Activated naive CD4-positive, alpha-beta T cell treated with anti-CD3 and anti-CD28 coated beads for 36 hours (primary cell): ENCODE measurements at regions of chr19 and their contacts with region 1.

Region 1: DNA sequence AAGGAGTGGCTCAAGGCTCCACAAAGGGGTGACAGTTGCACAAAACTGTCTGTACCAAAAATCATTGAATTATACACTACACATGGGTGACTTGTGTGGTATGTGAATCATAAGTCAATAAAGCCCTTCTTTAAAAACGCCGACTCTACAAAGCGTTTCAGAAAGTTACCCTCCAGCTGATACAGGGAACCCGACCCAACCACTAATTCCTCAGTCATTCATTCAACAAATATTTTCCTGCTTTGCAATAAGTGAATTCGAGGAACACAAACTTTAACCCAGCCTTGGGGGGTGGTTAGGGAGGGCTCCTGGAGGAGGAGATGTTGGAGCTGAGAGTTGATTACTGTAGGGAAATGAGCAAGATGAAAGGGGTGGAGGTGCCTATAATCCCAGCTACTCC is 32.0 kb downstream of the LTBP4 start:
- DNase-seq: no peak
- H3K4me3 Mint-ChIP-seq: no peak overlapping the region
- H3K27ac Mint-ChIP-seq: no peak overlapping the region
- H3K4me1 Mint-ChIP-seq: peaks cover 10% of the 10 kb centered on the region
- H3K27me3 Mint-ChIP-seq: peaks cover 3% of the 10 kb centered on the region

Region 2: GRCh38 chr19:40465557-40466150 is 167.6 kb before region 1 on chr19 and contains the start of gene BLVRB:
- CTCF ChIA-PET with region 1: interaction called, 6 read pairs
- intact Hi-C with region 1: loop called (anchors 1 kb)
- DNase-seq: peak; percentile 100
- H3K4me3 Mint-ChIP-seq: peak within 1 kb of the TSS; percentile 78
- H3K27ac Mint-ChIP-seq: peak within 1 kb of the TSS; percentile 50
- H3K4me1 Mint-ChIP-seq: peaks cover 26% of the 10 kb centered on the region
- H3K27me3 Mint-ChIP-seq: peaks cover 10% of the 10 kb centered on the region
- total RNA-seq, gene BLVRB: 29.4 to 30.2 TPM

Region 3: GRCh38 chr19:40529093-40529954 is 103.9 kb before region 1 on chr19:
- CTCF ChIA-PET with region 1: interaction called, 26 read pairs
- intact Hi-C with region 1: loop called (anchors 2 kb)
- DNase-seq: peak; percentile 92
- H3K4me3 Mint-ChIP-seq: peak overlapping the region; percentile 43
- H3K27ac Mint-ChIP-seq: no peak overlapping the region
- H3K4me1 Mint-ChIP-seq: peaks cover 10% of the 10 kb centered on the region
- H3K27me3 Mint-ChIP-seq: peaks cover 13% of the 10 kb centered on the region

Region 4: DNA sequence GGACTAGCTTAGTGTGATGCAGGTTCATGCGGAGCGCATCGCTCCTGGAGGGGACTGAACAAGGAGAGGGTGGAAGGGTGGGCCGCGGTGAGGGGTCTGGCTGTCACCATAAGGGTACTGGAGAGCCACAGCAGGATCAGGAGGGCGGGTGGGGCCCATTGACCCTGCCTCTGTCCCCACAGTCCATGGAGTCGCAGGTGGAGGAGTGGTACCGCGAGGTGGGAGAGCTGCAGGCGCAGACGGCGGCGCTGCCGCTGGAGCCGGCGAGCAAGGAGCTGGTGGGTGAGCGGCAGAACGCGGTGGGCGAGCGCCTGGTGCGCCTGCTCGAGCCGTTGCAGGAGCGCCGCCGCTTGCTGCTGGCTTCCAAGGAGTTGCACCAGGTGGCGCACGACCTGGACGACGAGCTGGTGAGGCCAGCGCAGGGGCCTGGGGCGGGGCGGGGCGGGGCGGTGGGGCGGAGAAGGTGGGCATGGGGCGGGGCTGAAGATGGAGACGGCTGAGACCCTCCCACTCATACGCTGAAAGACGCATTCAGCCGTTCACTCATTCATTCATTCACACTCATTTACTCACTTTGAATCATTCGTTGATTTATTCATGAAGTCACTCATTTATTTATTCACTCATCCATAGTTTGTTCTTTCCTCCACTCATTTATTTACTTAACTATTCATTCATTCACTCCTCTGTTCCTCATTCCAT is 84.0 kb before region 1 on chr19:
- CTCF ChIA-PET with region 1: interaction called, 21 read pairs
- intact Hi-C with region 1: loop called (anchors 1 kb)
- DNase-seq: peak; percentile 80
- H3K4me3 Mint-ChIP-seq: peak overlapping the region; percentile 0
- H3K27ac Mint-ChIP-seq: no peak overlapping the region
- H3K4me1 Mint-ChIP-seq: peaks cover 10% of the 10 kb centered on the region
- H3K27me3 Mint-ChIP-seq: peaks cover 41% of the 10 kb centered on the region

Region 5: DNA sequence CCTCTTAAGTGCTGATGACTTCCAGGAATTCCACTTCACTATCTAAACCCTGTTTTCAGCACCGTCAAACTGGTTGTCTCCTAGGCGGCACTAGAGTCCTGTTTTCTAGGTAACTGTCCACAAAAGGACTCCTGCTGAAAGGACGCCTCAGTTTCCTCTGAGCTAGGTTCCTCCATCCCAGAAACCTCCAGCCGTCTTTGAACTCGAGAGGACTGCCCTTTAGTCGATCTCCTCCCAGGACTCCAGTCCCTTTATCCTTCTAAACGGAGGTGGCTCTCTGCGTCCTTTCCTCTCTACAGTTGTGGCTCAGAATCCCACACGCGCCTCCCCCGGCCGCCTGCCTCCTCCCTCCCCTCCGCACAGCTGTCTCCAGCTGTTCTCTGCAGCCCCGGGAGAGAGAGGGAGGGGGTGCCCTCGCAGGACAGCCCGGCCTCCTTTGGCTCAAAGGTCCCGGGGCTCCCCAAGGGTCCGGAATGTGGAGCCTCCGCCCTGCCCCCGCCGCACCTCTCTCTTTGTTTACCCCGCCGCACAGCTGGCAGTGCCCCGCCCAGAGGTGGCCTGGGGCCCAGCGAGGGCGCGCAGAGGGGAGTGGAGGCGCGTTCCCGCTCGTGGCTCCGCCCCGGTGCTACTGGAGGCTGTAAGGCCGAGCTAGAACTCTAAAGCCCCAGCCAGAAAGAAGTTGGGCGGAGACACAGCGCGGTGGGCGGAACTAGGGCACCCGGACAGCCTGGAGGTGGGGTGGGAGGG is 29.6 kb before region 1 on chr19:
- CTCF ChIA-PET with region 1: interaction called, 68 read pairs
- intact Hi-C with region 1: loop called (anchors 1 kb)
- DNase-seq: peak; percentile 98
- H3K4me3 Mint-ChIP-seq: peak overlapping the region; percentile 79
- H3K27ac Mint-ChIP-seq: no peak overlapping the region
- H3K4me1 Mint-ChIP-seq: peaks cover 67% of the 10 kb centered on the region
- H3K27me3 Mint-ChIP-seq: peaks cover 28% of the 10 kb centered on the region

Region 6: DNA sequence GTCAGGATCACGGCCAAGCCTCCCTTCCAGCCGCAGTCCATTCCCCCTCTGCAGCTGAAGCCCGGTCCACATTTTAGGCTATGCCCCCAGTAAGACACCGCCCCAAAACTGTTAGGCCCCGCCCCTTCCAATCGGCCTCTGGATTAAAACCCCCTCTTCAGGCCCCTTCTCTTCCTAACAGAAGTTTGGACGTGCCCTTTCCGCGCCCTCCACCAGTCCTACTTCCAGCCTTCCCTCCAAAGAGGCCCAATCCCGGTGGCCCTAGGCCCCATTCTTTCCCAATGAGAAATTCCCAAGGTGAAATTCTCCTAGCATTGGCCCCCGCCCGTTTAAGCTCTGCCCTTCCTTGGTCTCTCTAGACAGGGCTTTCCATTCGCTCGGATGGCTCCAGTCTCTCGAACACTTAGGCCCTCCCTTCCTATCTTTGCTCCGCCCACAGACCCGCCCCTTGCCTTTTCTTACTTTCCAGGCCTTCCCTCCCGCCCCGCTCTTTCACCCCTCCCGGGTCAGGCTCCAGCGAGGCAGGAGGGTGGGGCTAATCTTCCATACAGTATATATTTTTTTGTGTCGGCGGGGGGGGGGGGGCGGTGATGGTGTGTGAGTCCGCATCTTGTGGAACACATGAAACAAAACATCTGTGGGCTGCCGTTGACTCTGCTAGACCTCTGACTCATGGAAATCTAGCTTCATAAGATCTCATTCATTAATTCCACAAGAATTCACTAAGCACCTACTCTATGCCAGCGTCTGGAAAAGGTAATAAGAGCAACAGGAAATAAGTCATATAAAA is 18.4 kb before region 1 on chr19:
- CTCF ChIA-PET with region 1: interaction called, 66 read pairs
- intact Hi-C with region 1: loop called (anchors 1 kb)
- DNase-seq: peak; percentile 98
- H3K4me3 Mint-ChIP-seq: peak overlapping the region; percentile 88
- H3K27ac Mint-ChIP-seq: peak overlapping the region; percentile 97
- H3K4me1 Mint-ChIP-seq: peaks cover 67% of the 10 kb centered on the region
- H3K27me3 Mint-ChIP-seq: no peaks in the 10 kb centered on the region

Region 7: GRCh38 chr19:40658031-40658430 is 24.8 kb after region 1 on chr19:
- CTCF ChIA-PET with region 1: interaction called, 11 read pairs
- intact Hi-C with region 1: no loop called
- DNase-seq: no peak
- H3K4me3 Mint-ChIP-seq: no peak overlapping the region
- H3K27ac Mint-ChIP-seq: no peak overlapping the region
- H3K4me1 Mint-ChIP-seq: peaks cover 4% of the 10 kb centered on the region
- H3K27me3 Mint-ChIP-seq: no peaks in the 10 kb centered on the region